Heart left ventricle (tissue), 16 donors: ENCODE measurements at regions of chr18 and their contacts with region 1.

Region 1: GRCh38 chr18:13369756-13370510 is 151.4 kb downstream of the LDLRAD4 start:
- DNase-seq: no peak
- ATAC-seq: peak in 1 of 4 donors; percentile 39
- H3K4me3 ChIP-seq: no peak overlapping the region
- H3K27ac ChIP-seq: no peak overlapping the region
- H3K4me1 ChIP-seq: peaks cover 0 to 27% (median 6%) of the 10 kb centered on the region in 12 donors
- H3K27me3 ChIP-seq: no peaks in the 10 kb centered on the region
- CTCF ChIP-seq: no peak
- POLR2A ChIP-seq: no peak

Region 2: DNA sequence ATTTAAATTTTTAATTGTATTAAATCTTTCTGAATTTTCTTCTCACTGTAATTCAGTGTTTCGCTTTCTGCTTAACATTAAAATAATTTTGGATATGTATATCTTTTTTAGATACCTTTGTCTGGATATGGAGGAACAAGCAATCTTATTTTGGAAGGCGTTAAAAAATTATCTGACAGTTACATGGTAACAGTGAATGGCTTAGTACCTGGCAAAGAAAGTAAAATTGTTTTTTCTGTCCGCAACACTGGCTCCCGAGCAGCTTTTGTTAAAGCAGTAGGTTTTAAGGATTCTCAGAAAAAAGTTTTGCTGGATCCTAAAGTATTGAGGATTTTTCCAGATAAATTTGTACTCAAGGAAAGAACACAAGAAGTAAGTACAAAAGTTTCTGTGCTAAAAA is 283.0 kb before region 1 on chr18:
- intact Hi-C with region 1: no loop called
- DNase-seq: no peak
- ATAC-seq: peak in 1 of 4 donors; percentile 58
- H3K4me3 ChIP-seq: peak overlapping the region in 9 of 12 donors; percentile 3 to 43 (median 26)
- H3K27ac ChIP-seq: peak overlapping the region in 2 of 12 donors; percentile 4 to 25
- H3K4me1 ChIP-seq: peaks cover 0 to 11% (median 0%) of the 10 kb centered on the region in 12 donors
- H3K27me3 ChIP-seq: no peaks in the 10 kb centered on the region
- CTCF ChIP-seq: no peak
- POLR2A ChIP-seq: no peak

Region 3: GRCh38 chr18:13791181-13791580 is 421.2 kb after region 1 on chr18:
- intact Hi-C with region 1: loop called in 1 of 10 experiments (anchors 5 kb)
- DNase-seq: no peak
- ATAC-seq: no peak
- H3K4me3 ChIP-seq: no peak overlapping the region
- H3K27ac ChIP-seq: no peak overlapping the region
- H3K4me1 ChIP-seq: no peaks in the 10 kb centered on the region
- H3K27me3 ChIP-seq: no peaks in the 10 kb centered on the region
- CTCF ChIP-seq: no peak
- POLR2A ChIP-seq: no peak